Breast epithelium (tissue), 4 donors: ENCODE measurements at regions of chr2 and their contacts with region 1.

Region 1: DNA sequence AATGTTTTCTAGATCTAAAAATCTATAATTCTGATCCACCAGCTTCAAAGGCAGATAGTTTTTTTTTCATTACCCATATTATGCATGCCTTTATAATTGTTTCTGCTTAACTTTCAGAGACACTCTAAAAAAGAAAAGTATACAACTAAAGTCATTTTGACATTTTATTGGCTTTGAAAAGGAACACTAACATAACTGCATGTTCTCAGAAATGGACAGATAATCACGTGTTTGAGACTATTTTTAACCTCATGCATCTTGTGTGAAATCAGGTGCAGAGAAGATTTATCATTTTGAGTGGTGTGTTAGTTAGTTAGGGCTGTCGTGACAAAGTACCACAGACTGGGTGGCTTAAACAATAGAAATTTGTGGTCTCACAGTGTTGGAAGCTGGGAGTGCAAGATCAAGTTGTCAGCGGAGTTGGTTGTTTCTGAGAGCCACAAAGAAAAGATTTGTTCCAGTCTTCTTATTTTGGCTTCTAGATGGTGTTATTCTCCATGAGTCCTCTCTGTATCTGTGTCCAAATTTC is 841.4 kb upstream of the LRATD1 start:
- DNase-seq: no peak
- H3K4me3 ChIP-seq: no peak overlapping the region
- H3K27ac ChIP-seq: no peak overlapping the region
- H3K4me1 ChIP-seq: no peaks in the 10 kb centered on the region
- H3K27me3 ChIP-seq: no peaks in the 10 kb centered on the region
- CTCF ChIP-seq: no peak
- POLR2A ChIP-seq: no peak

Region 2: GRCh38 chr2:12402440-12403139 is 1388.5 kb before region 1 on chr2:
- intact Hi-C with region 1: loop called (anchors 10 kb)
- DNase-seq: no peak
- H3K4me3 ChIP-seq: no peak overlapping the region
- H3K27ac ChIP-seq: no peak overlapping the region
- H3K4me1 ChIP-seq: no peaks in the 10 kb centered on the region
- H3K27me3 ChIP-seq: no peaks in the 10 kb centered on the region
- CTCF ChIP-seq: no peak
- POLR2A ChIP-seq: no peak

Region 3: DNA sequence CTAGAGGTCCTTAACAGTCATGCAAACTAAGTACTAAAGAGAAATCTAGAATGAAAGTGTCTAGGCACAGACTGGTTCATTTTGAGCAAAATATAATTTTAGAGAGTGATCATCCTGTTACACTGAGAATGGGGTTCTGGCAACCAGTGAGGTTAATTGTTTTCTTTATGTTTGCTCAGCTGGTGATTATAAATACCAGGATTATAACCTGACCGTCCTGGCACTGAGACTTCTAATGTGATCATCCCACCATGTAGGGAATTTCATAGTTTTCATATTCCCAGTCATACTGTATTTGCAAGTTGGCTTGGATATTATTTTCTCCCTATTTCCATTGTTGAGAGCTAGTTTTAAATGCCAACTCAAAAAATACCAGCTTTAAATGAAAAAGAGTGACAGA is 11.1 kb before region 1 on chr2:
- intact Hi-C with region 1: no loop called
- DNase-seq: no peak
- H3K4me3 ChIP-seq: no peak overlapping the region
- H3K27ac ChIP-seq: no peak overlapping the region
- H3K4me1 ChIP-seq: no peaks in the 10 kb centered on the region
- H3K27me3 ChIP-seq: no peaks in the 10 kb centered on the region
- CTCF ChIP-seq: no peak
- POLR2A ChIP-seq: no peak

Region 4: DNA sequence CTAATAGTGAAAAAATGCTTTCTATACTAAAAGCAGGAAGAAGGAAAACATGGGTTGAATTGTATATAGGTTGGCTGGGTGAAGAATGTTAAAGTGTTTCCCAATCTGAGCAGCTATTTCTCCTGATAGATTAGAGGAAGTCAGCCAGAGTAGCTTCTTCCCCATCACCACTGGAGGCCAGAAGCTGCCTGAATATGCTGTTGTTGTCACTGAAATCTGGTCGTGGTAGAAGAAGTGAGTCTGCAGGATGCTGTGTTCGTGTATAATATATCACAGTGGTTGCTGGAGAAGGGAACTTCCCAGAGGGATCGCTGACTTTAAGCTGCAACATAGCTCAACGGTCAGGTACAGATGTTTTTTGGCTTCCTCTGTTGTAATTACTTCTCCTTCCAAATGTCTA is 594.0 kb after region 1 on chr2:
- intact Hi-C with region 1: loop called (anchors 5 kb)
- DNase-seq: no peak
- H3K4me3 ChIP-seq: no peak overlapping the region
- H3K27ac ChIP-seq: no peak overlapping the region
- H3K4me1 ChIP-seq: no peaks in the 10 kb centered on the region
- H3K27me3 ChIP-seq: no peaks in the 10 kb centered on the region
- CTCF ChIP-seq: no peak
- POLR2A ChIP-seq: no peak

Region 5: DNA sequence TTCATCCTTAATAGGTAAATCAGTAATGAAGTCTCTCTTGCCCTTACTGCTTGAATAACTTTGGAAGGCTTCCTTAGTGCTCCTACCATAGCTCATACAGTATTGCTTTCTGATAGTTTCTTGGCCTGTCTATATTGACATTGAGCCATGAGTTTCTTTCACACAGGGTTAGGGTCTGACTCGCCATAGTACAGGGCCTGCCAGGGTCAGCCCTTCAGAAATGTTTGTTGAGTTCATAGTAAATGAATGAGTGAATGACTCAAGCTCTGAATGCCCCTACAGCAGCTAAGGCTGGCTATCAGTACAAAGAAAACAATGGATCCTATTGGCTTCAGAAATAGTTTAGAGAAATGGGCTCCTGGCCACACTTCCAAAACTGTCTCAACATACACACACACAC is 776.5 kb after region 1 on chr2:
- intact Hi-C with region 1: no loop called
- DNase-seq: no peak
- H3K4me3 ChIP-seq: no peak overlapping the region
- H3K27ac ChIP-seq: no peak overlapping the region
- H3K4me1 ChIP-seq: no peaks in the 10 kb centered on the region
- H3K27me3 ChIP-seq: no peaks in the 10 kb centered on the region
- CTCF ChIP-seq: no peak
- POLR2A ChIP-seq: no peak